ENCODE measurements at regions of chr17 and their contacts with region 1.

Region 1: DNA sequence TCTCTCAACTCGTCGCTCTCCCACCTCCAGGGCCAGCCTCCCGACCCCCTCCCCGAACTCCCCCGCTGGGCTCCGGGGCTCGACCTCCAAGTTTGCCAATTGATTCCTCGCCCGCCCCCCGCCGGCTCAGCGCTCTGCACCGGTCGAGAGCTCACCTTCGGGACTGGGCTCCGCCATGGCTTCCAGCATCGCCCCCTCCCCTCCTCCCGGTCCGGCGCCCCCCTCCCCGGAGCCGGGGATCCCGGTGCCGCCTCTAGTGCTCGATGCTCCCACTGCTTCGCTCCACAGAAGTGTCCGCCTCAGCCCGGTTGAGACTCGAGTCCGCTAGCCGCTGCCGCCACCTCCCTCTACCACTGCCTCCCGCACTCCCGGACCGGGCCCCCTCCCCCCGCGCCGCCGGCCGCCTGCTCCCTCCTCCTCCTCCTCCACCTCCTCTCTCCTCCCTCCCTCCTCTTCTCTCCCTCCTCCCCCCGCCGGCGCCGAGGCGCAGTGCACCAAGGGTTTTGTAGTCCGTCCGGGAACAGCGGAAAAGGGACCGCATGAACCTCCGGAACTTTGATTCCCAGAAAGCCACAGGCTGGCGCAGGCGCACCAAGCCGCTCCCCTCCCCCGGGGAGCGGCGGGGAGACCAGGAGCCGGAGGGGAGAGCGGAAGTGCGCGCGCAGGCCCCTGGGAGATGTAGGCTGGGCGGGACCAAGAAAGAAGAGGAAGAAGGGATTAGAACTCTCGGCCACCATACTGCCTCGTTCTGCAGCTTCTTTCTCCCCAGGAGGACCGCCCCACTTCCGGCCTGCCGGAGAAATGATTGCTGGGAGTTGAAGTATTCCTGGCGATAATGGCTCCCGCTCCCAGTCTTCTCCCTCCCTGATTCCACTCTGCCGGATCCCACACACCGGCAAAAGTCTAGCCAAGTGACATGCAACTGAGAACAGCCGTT is at the start of gene PHF23:
- DNase-seq: peak; percentile 98 to 99 (median 98)
- H3K4me3 ChIP-seq: peak within 1 kb of the TSS; percentile 89 to 98 (median 96)
- H3K27ac ChIP-seq: peak within 1 kb of the TSS; percentile 75 to 98
- H3K4me1 ChIP-seq: peaks cover 20 to 65% (median 51%) of the 10 kb centered on the region in 4 experiments
- H3K27me3 ChIP-seq: no peaks in the 10 kb centered on the region

Region 2: DNA sequence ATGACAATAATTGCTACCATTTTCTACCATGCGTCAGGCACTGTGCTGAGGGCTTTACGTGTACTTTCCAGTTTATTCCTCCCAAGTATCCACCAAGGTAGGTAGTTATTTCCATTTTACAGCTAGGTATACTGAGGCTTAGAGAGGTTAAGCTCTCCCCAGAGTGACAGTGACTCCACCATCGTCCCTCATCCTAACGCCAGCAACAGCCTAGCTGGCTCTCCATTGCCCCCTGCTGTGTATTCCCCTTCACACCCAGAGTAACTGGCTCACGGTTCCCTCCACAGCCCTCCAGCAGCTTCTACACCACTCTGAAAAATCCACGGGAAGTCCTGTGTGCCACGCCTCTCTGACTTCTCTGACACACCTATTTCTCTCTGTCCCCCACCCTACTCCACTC is 53.1 kb before region 1 on chr17:
- CTCF ChIA-PET with region 1: no interaction called
- POLR2A ChIA-PET with region 1: no interaction called
- DNase-seq: peak in 2 of 3 donors; percentile 52 to 64
- H3K4me3 ChIP-seq: no peak overlapping the region
- H3K27ac ChIP-seq: no peak overlapping the region
- H3K4me1 ChIP-seq: peaks cover 0 to 7% (median 6%) of the 10 kb centered on the region in 4 experiments
- H3K27me3 ChIP-seq: no peaks in the 10 kb centered on the region

Region 3: DNA sequence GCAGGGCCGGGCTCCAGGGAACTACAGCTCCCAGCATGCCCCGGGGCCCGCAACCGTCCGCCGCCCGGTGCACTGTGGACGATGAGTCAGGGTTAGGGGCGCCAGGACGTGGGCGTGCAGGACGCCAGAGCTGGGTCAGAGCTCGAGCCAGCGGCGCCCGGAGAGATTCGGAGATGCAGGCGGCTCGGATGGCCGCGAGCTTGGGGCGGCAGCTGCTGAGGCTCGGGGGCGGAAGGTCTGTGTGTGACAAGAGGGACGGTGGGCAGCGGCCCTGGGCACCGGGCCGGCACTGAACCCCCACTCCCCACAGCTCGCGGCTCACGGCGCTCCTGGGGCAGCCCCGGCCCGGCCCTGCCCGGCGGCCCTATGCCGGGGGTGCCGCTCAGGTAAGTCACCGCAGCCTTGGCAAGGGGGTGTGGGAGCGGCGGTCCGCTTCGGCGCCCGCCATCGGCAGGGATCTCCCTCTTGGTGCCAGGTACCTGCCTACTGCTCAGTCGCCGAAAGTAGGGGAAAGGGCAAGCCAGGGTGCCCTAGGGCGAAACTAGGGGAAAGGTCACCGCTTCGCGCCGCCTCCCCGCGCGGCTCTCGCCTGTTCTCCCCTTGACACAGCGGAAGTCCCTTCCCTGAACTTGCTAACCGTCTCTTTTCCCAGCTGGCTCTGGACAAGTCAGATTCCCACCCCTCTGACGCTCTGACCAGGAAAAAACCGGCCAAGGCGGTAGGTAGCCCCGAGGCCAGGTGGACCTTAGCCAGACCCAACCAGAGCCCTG is 19.4 kb before region 1 on chr17 and contains the starts of genes ACADVL and DLG4:
- CTCF ChIA-PET with region 1: interaction called, 75 read pairs
- POLR2A ChIA-PET with region 1: interaction called, 21 read pairs
- DNase-seq: peak; percentile 79 to 87 (median 81)
- H3K4me3 ChIP-seq: peak within 1 kb of the TSS; percentile 79 to 94 (median 87)
- H3K27ac ChIP-seq: peak within 1 kb of the TSS; percentile 58 to 76
- H3K4me1 ChIP-seq: peaks cover 5 to 58% (median 56%) of the 10 kb centered on the region in 4 experiments
- H3K27me3 ChIP-seq: no peaks in the 10 kb centered on the region

Region 4: DNA sequence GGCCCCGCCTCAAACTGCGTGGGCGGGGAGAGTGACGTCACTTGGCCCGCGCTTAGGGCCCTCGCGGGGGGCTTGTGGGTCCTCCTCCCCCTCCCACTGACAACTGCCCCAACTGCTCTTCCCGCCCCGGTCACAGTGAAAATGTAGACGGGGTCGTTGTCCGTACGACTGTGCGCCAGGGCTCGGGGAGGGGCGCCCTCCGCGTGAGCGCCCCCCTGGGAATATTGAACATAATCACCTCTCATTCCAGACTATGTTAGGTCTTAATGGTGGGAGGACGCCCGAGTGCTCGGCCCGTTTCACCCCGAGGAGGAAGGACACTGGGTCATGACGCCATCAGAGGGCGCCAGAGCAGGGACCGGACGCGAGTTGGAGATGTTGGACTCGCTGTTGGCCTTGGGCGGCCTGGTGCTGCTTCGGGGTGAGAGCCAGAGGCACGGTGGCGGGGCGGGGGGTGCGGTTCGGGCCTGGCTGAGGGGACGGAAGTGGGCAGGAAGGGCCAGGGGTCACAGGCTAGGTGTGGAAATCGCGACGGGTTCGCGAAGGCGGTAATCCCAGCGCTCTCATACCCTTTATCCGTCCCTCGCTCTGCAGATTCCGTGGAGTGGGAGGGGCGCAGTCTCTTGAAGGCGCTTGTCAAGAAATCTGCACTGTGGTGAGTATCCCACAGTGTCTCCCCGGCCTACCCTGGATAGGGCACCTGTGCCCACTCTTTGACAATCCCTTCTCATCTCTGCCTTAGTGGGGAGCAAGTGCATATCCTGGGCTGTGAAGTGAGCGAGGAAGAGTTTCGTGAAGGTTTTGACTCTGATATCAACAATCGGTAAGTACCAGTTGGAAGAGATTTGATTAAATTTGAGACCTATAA is 13.1 kb after region 1 on chr17 and contains the start of gene ELP5:
- CTCF ChIA-PET with region 1: interaction called, 31 read pairs
- POLR2A ChIA-PET with region 1: interaction called, 12 read pairs
- DNase-seq: peak; percentile 96
- H3K4me3 ChIP-seq: peak within 1 kb of the TSS; percentile 55 to 96 (median 90)
- H3K27ac ChIP-seq: peak within 1 kb of the TSS; percentile 98 to 99
- H3K4me1 ChIP-seq: peaks cover 12 to 36% (median 30%) of the 10 kb centered on the region in 4 experiments
- H3K27me3 ChIP-seq: no peaks in the 10 kb centered on the region

Region 5: GRCh38 chr17:7266784-7267183 is 27.4 kb after region 1 on chr17:
- CTCF ChIA-PET with region 1: no interaction called
- POLR2A ChIA-PET with region 1: no interaction called
- DNase-seq: no peak
- H3K4me3 ChIP-seq: no peak overlapping the region
- H3K27ac ChIP-seq: no peak overlapping the region
- H3K4me1 ChIP-seq: peaks cover 0 to 20% (median 18%) of the 10 kb centered on the region in 4 experiments
- H3K27me3 ChIP-seq: peaks cover 0 to 35% (median 16%) of the 10 kb centered on the region in 5 experiments

Region 6: GRCh38 chr17:7363311-7363710 is 124.0 kb after region 1 on chr17:
- CTCF ChIA-PET with region 1: no interaction called
- POLR2A ChIA-PET with region 1: no interaction called
- DNase-seq: no peak
- H3K4me3 ChIP-seq: no peak overlapping the region
- H3K27ac ChIP-seq: no peak overlapping the region
- H3K4me1 ChIP-seq: no peaks in the 10 kb centered on the region
- H3K27me3 ChIP-seq: no peaks in the 10 kb centered on the region

Measured in common myeloid progenitor, CD34-positive (primary cell).